CD8-positive, alpha-beta T cell (primary cell): ENCODE measurements at regions of chr20 and their contacts with region 1.

Region 1: DNA sequence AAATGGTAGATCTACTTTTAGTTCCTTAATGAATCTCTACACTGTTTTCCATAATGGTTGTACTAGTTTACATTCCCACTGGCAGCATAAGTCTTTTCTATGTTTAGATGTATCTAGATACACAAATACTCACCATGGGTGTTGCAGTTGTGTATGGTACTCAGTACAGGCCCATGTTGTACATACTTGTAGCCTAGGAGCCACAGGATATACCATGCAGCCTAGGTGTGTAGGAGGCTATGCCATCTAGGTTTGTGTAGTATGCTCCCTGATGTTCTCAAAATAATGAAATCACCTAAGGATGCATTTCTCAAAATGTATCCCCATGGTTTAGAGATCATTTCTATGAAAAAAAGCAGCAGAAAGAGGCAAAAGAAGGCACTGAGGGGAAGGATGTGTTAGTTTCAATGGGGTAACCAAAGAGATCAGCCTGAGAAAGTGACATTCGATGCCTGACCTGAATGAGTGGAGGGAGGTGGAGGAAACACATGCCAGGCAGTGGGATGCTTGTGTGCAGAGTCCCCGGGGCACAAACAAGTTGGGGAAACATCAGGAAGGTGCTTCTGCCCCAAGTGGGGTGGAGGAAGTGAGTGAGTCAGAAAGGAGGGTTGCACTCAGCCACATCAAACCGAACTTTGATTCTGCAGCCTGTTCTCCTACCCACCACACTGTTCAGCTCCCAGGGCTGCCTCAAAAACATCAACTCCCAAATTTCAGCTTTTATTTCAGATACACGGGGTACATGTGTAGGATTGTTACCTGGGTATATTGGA is 191.2 kb downstream of the ZNF217 start:
- DNase-seq: peak in 8 of 9 experiments; percentile 24 to 71 (median 55)
- ATAC-seq: peak; percentile 89
- H3K4me3 ChIP-seq: no peak overlapping the region
- H3K4me3 Mint-ChIP-seq: no peak overlapping the region
- H3K27ac ChIP-seq: no peak overlapping the region
- H3K27ac Mint-ChIP-seq: peak overlapping the region; percentile 76
- H3K4me1 ChIP-seq: peaks cover 35% of the 10 kb centered on the region
- H3K4me1 Mint-ChIP-seq: peaks cover 54% of the 10 kb centered on the region
- H3K27me3 ChIP-seq: no peaks in the 10 kb centered on the region
- H3K27me3 Mint-ChIP-seq: no peaks in the 10 kb centered on the region
- CTCF ChIP-seq: no peak

Region 2: GRCh38 chr20:53322651-53323050 is 79.8 kb before region 1 on chr20:
- CTCF ChIA-PET with region 1: no interaction called
- POLR2A ChIA-PET with region 1: no interaction called
- intact Hi-C with region 1: no loop called
- DNase-seq: peak in 5 of 9 experiments; percentile 16 to 54 (median 23)
- ATAC-seq: peak; percentile 70
- H3K4me3 ChIP-seq: no peak overlapping the region
- H3K4me3 Mint-ChIP-seq: peak overlapping the region; percentile 12
- H3K27ac ChIP-seq: peak overlapping the region in 1 of 2 experiments; percentile 30
- H3K27ac Mint-ChIP-seq: peak overlapping the region; percentile 88
- H3K4me1 ChIP-seq: peaks cover 9% of the 10 kb centered on the region
- H3K4me1 Mint-ChIP-seq: peaks cover 22% of the 10 kb centered on the region
- H3K27me3 ChIP-seq: no peaks in the 10 kb centered on the region
- H3K27me3 Mint-ChIP-seq: peaks cover 2% of the 10 kb centered on the region
- CTCF ChIP-seq: no peak

Region 3: DNA sequence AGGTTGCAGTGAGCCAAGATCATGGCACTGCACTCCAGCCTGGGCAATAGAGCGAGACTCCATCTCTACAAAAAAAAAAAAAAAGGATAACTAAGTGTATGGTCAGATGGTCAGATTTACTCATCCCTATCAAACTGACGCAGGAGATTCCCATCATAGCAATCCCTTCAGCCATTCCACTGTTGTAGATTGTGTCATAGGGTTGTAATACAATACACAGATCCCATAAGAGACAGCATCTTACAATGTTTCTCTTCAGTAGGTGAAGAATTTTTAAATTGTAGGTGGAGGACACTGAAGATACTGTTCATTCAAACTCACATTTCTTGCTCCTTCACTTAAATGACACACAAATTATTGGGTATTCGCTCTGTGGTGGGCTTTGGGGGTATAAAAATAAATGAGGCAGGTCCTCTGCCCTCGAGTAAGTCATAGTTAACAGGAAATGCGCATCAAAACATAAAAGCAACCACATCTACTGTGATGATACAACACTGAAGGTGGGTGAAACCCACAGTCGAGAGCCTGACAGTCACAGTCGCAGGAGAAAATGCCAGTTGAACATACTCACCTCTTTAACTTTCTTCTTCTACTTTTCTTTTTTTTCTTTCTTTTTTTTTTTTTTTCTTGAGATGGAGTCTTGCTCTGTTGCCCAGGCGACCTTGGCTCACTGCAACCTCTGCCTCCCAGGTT is 14.3 kb before region 1 on chr20:
- CTCF ChIA-PET with region 1: no interaction called
- POLR2A ChIA-PET with region 1: no interaction called
- intact Hi-C with region 1: loop called (anchors 1 kb)
- DNase-seq: peak in 6 of 9 experiments; percentile 16 to 85 (median 58)
- ATAC-seq: peak; percentile 94
- H3K4me3 ChIP-seq: no peak overlapping the region
- H3K4me3 Mint-ChIP-seq: peak overlapping the region; percentile 20
- H3K27ac ChIP-seq: no peak overlapping the region
- H3K27ac Mint-ChIP-seq: peak overlapping the region; percentile 58
- H3K4me1 ChIP-seq: peaks cover 27% of the 10 kb centered on the region
- H3K4me1 Mint-ChIP-seq: peaks cover 42% of the 10 kb centered on the region
- H3K27me3 ChIP-seq: peaks cover 0 to 2% of the 10 kb centered on the region in 2 experiments
- H3K27me3 Mint-ChIP-seq: no peaks in the 10 kb centered on the region
- CTCF ChIP-seq: no peak